AG04449 (cell line): ENCODE measurements at regions of chr10 and their contacts with region 1.

Region 1: GRCh38 chr10:70461215-70461986 is 17.2 kb upstream of the PALD1 start:
- DNase-seq: peak; percentile 14
- H3K4me3 ChIP-seq: no peak overlapping the region
- CTCF ChIP-seq: peak; percentile 87

Region 2: DNA sequence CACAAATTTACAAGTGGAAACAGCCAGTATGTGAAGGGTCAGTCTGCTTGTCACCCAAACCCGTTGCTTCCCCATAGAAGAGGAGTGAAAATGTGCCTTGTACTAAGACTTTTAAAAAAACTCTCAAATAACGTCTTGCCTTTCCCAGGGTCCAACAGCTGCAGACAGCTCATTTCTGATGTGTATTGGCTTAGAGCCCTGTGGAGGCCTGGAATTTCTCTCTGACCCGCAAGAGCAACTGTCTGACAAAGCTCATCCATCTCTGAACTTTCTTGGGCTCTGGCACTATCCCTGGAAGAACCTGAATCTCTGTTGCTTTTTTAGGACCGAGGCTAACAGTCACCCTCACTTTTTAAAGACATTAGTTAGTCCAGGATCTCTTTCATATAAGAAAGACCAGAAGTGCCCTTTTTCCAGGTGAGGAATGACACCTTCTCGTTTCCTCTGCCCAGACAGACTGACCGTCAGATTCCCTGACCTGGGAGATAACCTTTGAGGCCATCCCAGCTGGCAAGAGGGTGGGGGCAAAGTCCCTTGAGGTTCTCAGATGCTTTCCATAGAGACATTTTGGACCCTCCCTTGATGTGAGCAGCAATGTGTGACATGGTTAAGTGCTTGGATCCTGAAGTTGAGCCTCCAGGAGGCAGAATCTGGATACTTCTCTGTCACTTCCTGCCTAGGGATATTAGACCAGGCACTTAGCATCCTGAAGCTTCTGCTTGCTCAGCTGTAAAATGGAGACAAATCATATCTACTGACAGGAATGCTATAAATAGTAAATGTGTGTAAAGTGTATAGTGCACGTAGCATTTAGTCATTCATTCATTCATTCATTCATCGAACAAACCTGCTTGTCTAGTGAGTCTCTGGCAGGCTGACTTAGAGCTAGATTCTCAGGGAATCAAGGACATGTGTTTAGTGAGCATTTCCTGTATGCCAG is 15.4 kb before region 1 on chr10:
- CTCF ChIA-PET with region 1: interaction called, 31 read pairs
- POLR2A ChIA-PET with region 1: interaction called, 3 read pairs
- DNase-seq: peak; percentile 17
- H3K4me3 ChIP-seq: no peak overlapping the region
- CTCF ChIP-seq: no peak

Region 3: DNA sequence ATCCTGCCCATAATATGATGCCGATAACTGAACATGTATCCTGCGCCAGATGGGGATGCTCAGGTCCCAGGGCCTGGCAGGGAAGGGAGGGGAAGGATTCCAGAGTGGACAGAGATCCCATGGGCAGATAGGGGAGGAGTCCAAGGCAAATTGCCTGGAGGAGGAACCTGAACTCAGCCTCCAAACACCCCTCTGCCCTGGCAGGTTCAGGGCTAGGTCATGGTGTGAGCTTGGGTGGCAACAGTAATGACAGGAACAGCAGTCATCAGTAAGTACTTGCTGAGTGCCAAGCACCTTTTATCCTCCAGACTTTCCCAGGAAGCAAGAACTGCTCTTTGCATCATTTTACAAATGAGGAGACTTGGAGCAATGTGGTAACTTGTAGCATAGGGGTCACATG is 13.4 kb after region 1 on chr10:
- CTCF ChIA-PET with region 1: interaction called, 23 read pairs
- POLR2A ChIA-PET with region 1: no interaction called
- DNase-seq: no peak
- H3K4me3 ChIP-seq: no peak overlapping the region
- CTCF ChIP-seq: no peak

Region 4: GRCh38 chr10:70540089-70540788 is 78.8 kb after region 1 on chr10:
- CTCF ChIA-PET with region 1: interaction called, 180 read pairs
- POLR2A ChIA-PET with region 1: interaction called, 3 read pairs
- DNase-seq: no peak
- H3K4me3 ChIP-seq: no peak overlapping the region
- CTCF ChIP-seq: peak; percentile 77